K562 (cell line): ENCODE measurements at regions of chr12 and their contacts with region 1.

Region 1: DNA sequence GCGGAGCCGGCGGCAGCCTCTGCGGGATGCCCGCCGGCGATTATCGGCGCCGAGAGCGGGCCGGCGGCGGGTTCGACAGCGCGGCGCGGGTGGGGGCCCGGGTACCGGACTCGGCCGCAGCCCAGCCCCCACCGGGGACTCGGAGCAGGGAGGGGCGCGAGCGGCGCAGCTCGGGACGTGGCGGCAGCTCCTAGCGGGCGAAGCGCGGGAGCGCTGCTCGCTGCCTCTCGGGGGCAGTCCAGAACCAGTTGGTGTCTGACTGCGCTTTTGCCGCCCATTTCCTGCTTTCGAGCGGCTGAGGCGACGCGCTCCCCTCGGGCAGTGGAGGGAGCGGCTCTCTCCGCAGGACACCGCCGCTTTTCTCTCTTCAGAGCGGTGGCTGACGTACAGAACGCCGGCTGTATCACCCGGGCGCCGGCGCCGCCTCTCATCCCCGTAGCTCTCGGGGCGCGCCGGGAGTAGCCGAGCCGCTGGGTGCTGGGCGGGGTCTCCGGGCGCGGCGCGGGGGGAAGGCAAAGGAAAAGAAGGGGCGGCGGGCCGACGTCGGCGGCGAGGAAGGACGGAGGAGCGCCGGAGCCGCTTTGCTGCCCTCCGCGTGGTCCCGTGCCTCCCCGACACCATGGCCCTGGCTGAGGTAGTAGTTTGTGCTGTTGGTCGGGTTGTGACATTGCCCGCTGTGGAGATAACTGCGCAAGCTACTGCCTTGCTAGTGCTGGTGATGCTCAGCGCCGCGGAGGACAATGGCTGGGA is 136.6 kb downstream of the MON2 start:
- DNase-seq: peak; percentile 77 to 91 (median 82)
- ATAC-seq: peak; percentile 94
- H3K4me3 ChIP-seq: peak overlapping the region; percentile 73
- H3K27ac ChIP-seq: peak overlapping the region; percentile 100
- H3K4me1 ChIP-seq: peaks cover 17% of the 10 kb centered on the region in 2 experiments; a peak in 4 of 5 replicates
- H3K27me3 ChIP-seq: no peaks in the 10 kb centered on the region
- CTCF ChIP-seq: peak; percentile 40 to 88 (median 66); a peak in 4 of 6 replicates
- EP300 ChIP-seq: no peak
- POLR2A ChIP-seq: peak; percentile 83
- RAD21 ChIP-seq: peak; percentile 53 to 60

Region 2: GRCh38 chr12:62466594-62467491 is 136.4 kb before region 1 on chr12 and contains the start of gene MON2:
- CTCF ChIA-PET with region 1: no interaction called
- POLR2A ChIA-PET with region 1: interaction called, 4 read pairs
- in situ Hi-C with region 1: no loop called
- intact Hi-C with region 1: loop called (anchors 2 kb)
- DNase-seq: peak; percentile 86 to 93 (median 90)
- ATAC-seq: peak; percentile 98
- H3K4me3 ChIP-seq: peak within 1 kb of the TSS; percentile 98
- H3K27ac ChIP-seq: peak within 1 kb of the TSS; percentile 91
- H3K4me1 ChIP-seq: peaks cover 3 to 14% of the 10 kb centered on the region in 2 experiments; a peak in 4 of 5 replicates
- H3K27me3 ChIP-seq: no peaks in the 10 kb centered on the region
- CTCF ChIP-seq: peak in 1 of 3 experiments; percentile 2; a peak in 1 of 6 replicates
- EP300 ChIP-seq: no peak
- POLR2A ChIP-seq: peak; percentile 91
- RAD21 ChIP-seq: no peak
- polyA plus RNA-seq, gene MON2: 3.6 to 4.3 TPM

Region 3: DNA sequence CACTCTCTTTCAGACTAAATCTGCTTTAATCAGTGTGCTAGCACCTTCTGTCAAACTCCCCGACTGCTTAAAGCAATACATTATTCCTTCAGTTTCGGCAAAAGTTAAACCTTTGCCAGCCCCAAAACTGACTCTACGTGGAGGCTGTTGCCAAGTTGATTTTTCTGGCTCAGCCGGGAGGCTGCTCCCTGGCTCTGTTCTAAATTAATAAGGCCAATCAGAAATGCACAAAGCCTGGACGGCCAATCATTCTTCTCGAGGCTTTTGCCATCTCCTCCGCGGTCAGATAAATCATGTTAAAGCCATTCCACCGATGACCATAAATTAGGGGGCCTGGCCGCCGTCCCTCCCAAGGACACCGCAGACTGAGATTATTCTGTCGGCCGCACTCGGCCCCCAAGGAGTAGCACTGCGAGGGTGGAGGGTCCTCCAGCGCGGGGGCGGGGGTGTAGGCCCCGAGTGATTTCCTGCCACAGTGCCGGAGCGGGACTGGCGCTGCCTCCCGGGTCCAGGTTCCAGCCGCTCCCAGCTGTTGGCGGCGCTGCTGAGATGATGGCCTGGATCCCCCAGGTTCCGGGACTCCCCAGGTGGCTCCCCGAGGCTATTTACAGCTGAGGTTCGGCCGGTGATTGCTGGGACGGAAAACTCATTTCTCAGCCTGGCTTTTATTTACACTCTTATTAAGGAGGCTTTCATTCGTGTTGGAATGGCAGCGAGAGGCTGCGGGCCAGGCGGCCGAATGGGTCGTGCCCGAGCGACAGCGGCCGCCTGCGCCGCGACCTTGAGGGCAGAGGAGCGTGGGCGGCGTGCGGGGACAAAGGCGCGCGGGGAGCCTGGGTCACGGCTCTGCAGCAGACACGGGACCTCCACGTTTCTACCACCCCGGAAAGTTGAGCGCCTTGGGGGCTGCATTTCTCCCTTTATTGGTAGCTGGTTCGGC is 28.5 kb after region 1 on chr12:
- CTCF ChIA-PET with region 1: no interaction called
- POLR2A ChIA-PET with region 1: no interaction called
- in situ Hi-C with region 1: no loop called
- intact Hi-C with region 1: no loop called
- DNase-seq: no peak
- ATAC-seq: peak; percentile 37
- H3K4me3 ChIP-seq: no peak overlapping the region
- H3K27ac ChIP-seq: no peak overlapping the region
- H3K4me1 ChIP-seq: peaks cover 0 to 11% of the 10 kb centered on the region in 2 experiments; a peak in 2 of 5 replicates
- H3K27me3 ChIP-seq: peaks cover 27 to 32% of the 10 kb centered on the region in 2 experiments
- CTCF ChIP-seq: no peak
- EP300 ChIP-seq: no peak
- POLR2A ChIP-seq: no peak
- RAD21 ChIP-seq: no peak

Region 4: GRCh38 chr12:62793256-62794217 is 190.3 kb after region 1 on chr12:
- CTCF ChIA-PET with region 1: interaction called, 3 read pairs
- POLR2A ChIA-PET with region 1: interaction called, 3 read pairs
- in situ Hi-C with region 1: no loop called
- intact Hi-C with region 1: loop called (anchors 1 kb)
- DNase-seq: peak; percentile 67 to 78 (median 70)
- ATAC-seq: peak; percentile 87
- H3K4me3 ChIP-seq: no peak overlapping the region
- H3K27ac ChIP-seq: no peak overlapping the region
- H3K4me1 ChIP-seq: no peaks in the 10 kb centered on the region
- H3K27me3 ChIP-seq: no peaks in the 10 kb centered on the region
- CTCF ChIP-seq: peak; percentile 80 to 92 (median 86)
- EP300 ChIP-seq: no peak
- POLR2A ChIP-seq: no peak
- RAD21 ChIP-seq: peak; percentile 93 to 95